HepG2 (cell line): ENCODE measurements at regions of chr20 and their contacts with region 1.

Region 1: DNA sequence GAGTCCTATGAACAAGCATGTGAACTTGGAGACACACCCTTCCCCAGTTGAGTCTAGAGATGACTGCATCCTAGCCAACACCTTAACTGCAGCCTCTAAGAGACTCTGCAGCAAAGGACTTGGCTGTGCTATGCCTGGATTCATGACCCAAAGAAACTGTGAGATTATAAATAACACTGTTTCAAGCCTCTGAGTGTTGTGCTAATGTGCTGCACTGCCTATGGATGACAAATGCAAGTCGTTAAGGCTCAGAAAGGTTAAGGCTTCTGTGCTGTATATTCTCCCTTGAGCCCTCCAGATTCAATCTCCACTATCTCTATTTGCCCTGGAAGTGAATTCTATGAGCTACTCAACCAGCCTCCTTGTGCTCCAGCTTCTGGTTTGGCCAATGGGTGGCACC is 116.5 kb upstream of the CBLN4 start:
- DNase-seq: no peak
- ATAC-seq: no peak
- H3K4me3 ChIP-seq: no peak overlapping the region
- H3K27ac ChIP-seq: no peak overlapping the region
- H3K4me1 ChIP-seq: no peaks in the 10 kb centered on the region
- H3K27me3 ChIP-seq: no peaks in the 10 kb centered on the region
- CTCF ChIP-seq: no peak
- EP300 ChIP-seq: no peak
- POLR2A ChIP-seq: no peak
- RAD21 ChIP-seq: no peak

Region 2: DNA sequence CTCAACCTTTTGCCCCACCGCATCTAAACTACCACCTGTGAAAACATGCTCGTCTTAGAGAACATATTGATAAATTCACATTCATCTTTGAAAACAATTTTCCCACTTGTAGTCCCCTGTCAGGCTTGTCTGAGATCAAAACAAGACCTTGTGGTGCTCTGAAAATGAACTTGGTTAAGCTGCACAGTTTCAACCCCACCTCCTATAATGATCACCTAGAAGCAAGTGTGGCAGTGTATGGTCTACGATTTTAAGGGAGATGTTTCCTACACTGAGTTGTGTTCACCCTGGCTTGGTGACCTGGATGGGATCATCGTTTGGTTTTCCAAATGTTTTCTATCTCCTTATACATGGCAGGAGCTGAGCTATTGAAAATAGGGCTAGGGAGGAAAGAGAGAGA is 1107.1 kb before region 1 on chr20:
- CTCF ChIA-PET with region 1: no interaction called
- POLR2A ChIA-PET with region 1: no interaction called
- in situ Hi-C with region 1: no loop called
- intact Hi-C with region 1: loop called (anchors 5 kb)
- DNase-seq: no peak
- ATAC-seq: no peak
- H3K4me3 ChIP-seq: no peak overlapping the region
- H3K27ac ChIP-seq: no peak overlapping the region
- H3K4me1 ChIP-seq: no peaks in the 10 kb centered on the region
- H3K27me3 ChIP-seq: no peaks in the 10 kb centered on the region
- CTCF ChIP-seq: no peak
- EP300 ChIP-seq: no peak
- POLR2A ChIP-seq: no peak
- RAD21 ChIP-seq: no peak

Region 3: DNA sequence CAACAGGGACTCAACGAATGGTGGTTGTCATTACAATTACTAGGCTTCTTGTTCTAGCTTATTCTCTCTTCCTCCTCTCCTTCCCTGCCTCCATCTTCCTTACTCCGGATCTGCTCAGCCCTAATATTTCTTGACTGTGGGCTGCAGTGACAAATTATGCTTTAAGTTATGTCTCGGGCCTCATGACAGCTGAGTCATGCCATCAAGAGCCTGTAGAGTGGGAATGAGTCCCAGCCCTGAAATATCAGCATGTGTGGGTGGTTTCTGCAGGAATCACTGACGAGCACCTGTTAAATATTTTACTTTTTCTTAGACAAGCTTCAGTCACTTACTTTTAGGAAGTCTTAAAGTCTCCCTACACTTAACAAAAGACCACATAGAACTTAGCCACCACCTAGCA is 33.5 kb before region 1 on chr20:
- CTCF ChIA-PET with region 1: no interaction called
- POLR2A ChIA-PET with region 1: no interaction called
- in situ Hi-C with region 1: no loop called
- intact Hi-C with region 1: no loop called
- DNase-seq: no peak
- ATAC-seq: no peak
- H3K4me3 ChIP-seq: no peak overlapping the region
- H3K27ac ChIP-seq: no peak overlapping the region
- H3K4me1 ChIP-seq: no peaks in the 10 kb centered on the region
- H3K27me3 ChIP-seq: no peaks in the 10 kb centered on the region
- CTCF ChIP-seq: no peak
- EP300 ChIP-seq: no peak
- POLR2A ChIP-seq: no peak
- RAD21 ChIP-seq: no peak